ENCODE measurements at regions of chr5 and their contacts with region 1.

Region 1: GRCh38 chr5:35852084-35852734 is 4.5 kb upstream of the IL7R start:
- DNase-seq: peak; percentile 78
- H3K4me3 Mint-ChIP-seq: peak overlapping the region; percentile 91
- H3K27ac Mint-ChIP-seq: peak overlapping the region; percentile 100
- H3K4me1 Mint-ChIP-seq: peaks cover 63% of the 10 kb centered on the region
- H3K27me3 Mint-ChIP-seq: no peaks in the 10 kb centered on the region

Region 2: DNA sequence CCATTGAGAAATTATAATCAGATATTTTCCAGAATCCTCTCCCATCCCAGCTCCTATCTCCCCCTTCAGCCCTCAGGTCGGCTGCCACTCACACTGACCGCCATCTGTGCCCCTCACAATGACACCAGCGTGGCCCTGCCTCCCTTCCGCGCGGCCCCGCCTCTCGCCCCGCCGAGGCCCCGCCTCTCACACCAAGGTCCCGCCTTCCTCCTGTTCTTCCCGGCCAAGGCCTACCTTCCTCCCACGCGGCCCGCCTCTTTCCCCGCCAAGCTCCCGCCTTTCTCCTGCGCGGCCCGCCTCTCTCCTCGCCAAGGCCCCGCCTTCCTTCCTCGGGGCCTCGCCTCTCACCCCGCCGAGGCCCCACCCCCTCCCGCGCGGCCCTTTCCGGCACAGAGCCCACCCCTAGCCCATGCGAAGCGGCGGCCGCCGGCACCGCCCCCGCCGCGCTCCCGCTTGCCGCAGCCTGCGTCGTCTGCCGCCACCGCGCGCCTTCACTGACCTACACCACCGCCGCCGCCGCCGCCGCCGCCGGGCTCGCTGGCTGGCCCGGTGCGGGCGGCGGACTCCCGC is 923.0 kb before region 1 on chr5 and contains the start of gene DNAJC21:
- CTCF ChIA-PET with region 1: no interaction called
- intact Hi-C with region 1: loop called (anchors 10 kb)
- DNase-seq: peak; percentile 99
- H3K4me3 Mint-ChIP-seq: peak within 1 kb of the TSS; percentile 94
- H3K27ac Mint-ChIP-seq: peak within 1 kb of the TSS; percentile 94
- H3K4me1 Mint-ChIP-seq: peaks cover 37% of the 10 kb centered on the region
- H3K27me3 Mint-ChIP-seq: no peaks in the 10 kb centered on the region
- total RNA-seq, gene DNAJC21: 59.1 to 62.1 TPM

Region 3: GRCh38 chr5:35651002-35651756 is 201.0 kb before region 1 on chr5:
- CTCF ChIA-PET with region 1: interaction called, 8 read pairs
- intact Hi-C with region 1: loop called (anchors 1 kb)
- DNase-seq: peak; percentile 83
- H3K4me3 Mint-ChIP-seq: no peak overlapping the region
- H3K27ac Mint-ChIP-seq: no peak overlapping the region
- H3K4me1 Mint-ChIP-seq: peaks cover 9% of the 10 kb centered on the region
- H3K27me3 Mint-ChIP-seq: no peaks in the 10 kb centered on the region

Region 4: DNA sequence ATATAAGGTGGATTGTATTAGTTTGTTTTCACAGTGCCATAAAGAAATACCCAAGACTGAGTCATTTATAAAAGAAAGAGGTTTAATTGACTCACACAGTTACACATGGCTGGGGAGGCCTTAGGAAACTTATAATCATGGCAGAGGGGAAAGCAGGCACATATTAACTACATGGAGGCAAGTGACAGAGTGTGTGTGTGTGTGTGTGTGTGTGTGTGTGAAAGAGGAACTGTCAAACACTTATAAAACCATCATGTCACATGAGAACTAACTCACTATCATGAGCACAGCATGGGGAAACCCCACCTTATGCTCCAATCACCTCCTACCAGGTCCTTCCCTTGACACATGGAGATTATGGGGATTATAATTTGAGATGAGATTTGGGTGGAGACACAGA is 115.9 kb before region 1 on chr5:
- CTCF ChIA-PET with region 1: no interaction called
- intact Hi-C with region 1: loop called (anchors 1 kb)
- DNase-seq: peak; percentile 83
- H3K4me3 Mint-ChIP-seq: no peak overlapping the region
- H3K27ac Mint-ChIP-seq: peak overlapping the region; percentile 73
- H3K4me1 Mint-ChIP-seq: peaks cover 58% of the 10 kb centered on the region
- H3K27me3 Mint-ChIP-seq: no peaks in the 10 kb centered on the region

Region 5: DNA sequence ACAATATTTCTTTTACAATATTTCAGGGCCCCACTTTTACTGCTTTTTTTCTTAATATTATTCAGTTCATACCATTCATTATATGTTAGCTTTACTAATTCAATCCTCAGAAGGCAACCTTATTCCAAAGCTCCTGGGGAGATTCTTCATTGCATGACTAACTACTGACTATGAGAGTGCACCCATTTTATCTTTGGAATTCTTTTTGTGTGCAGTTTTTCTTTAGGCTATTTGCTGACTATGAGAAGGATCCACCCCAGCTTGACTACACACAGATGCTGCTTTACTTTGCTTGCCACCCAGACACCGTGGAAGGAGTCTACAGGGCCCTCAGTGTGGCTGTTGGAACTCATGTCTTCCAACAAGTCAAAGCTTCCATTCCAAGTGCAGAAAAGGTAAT is 52.5 kb before region 1 on chr5:
- CTCF ChIA-PET with region 1: interaction called, 3 read pairs
- intact Hi-C with region 1: loop called (anchors 1 kb)
- DNase-seq: no peak
- H3K4me3 Mint-ChIP-seq: no peak overlapping the region
- H3K27ac Mint-ChIP-seq: no peak overlapping the region
- H3K4me1 Mint-ChIP-seq: peaks cover 76% of the 10 kb centered on the region
- H3K27me3 Mint-ChIP-seq: no peaks in the 10 kb centered on the region

Region 6: GRCh38 chr5:35832762-35833161 is 19.4 kb before region 1 on chr5:
- CTCF ChIA-PET with region 1: interaction called, 12 read pairs
- intact Hi-C with region 1: loop called (anchors 1 kb)
- DNase-seq: no peak
- H3K4me3 Mint-ChIP-seq: no peak overlapping the region
- H3K27ac Mint-ChIP-seq: peak overlapping the region; percentile 95
- H3K4me1 Mint-ChIP-seq: peaks cover 94% of the 10 kb centered on the region
- H3K27me3 Mint-ChIP-seq: no peaks in the 10 kb centered on the region

Region 7: DNA sequence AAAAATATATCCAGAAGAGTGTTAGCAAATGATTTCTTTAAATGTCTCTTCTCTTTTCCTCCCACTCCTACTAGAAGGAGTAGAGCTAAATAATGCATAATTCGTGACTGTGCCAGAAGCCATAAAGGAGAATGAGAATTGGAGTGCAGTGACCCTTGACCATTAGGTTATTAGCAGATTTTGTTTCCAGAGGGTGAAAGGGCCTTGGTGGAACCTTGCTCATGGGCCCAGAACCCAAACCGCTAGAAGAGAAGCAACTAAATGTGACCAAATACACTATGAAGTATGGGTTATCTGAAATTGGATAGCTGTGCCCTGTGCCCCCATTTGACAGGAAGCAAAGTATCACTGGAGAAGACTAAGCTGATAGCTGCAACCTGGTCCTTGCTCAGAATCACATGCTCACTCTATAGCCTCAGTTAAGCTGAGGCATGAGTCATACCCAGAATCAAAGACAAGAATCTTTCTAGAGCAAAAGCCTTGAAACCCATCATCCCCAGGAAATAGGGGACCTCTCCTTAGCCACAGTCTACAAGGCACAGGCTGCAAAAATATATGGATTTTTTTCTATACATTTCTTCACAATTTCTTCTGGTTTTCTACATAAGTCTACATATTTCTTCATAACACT is 50.0 kb after region 1 on chr5:
- CTCF ChIA-PET with region 1: interaction called, 3 read pairs
- intact Hi-C with region 1: loop called (anchors 1 kb)
- DNase-seq: peak; percentile 58
- H3K4me3 Mint-ChIP-seq: no peak overlapping the region
- H3K27ac Mint-ChIP-seq: peak overlapping the region; percentile 34
- H3K4me1 Mint-ChIP-seq: peaks cover 85% of the 10 kb centered on the region
- H3K27me3 Mint-ChIP-seq: no peaks in the 10 kb centered on the region

Region 8: GRCh38 chr5:36772276-36773140 is 920.3 kb after region 1 on chr5:
- CTCF ChIA-PET with region 1: no interaction called
- intact Hi-C with region 1: no loop called
- DNase-seq: no peak
- H3K4me3 Mint-ChIP-seq: no peak overlapping the region
- H3K27ac Mint-ChIP-seq: no peak overlapping the region
- H3K4me1 Mint-ChIP-seq: no peaks in the 10 kb centered on the region
- H3K27me3 Mint-ChIP-seq: peaks cover under 1% of the 10 kb centered on the region